Mammary epithelial cell (primary cell): ENCODE measurements at regions of chr9 and their contacts with region 1.

Region 1: DNA sequence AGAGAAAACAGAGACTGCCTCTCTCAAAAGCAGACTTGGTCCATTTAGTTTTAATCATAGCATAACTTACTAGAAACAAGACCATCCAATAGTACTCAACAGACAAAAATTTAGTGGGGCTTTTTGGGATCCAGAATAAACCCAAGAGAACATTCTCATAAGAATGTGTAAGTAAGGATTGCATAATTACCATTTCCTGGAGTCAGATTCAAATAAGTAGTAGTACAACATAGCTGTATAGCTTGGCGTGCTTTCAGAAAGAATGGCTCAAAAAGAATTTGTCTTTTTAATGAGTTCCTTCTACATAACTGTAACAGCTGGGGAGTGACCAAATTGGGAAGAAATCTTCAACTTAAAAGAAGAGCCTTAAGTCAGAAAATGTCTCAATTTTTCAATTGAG is 145.4 kb downstream of the DENND1A start:
- DNase-seq: peak; percentile 17
- H3K4me3 ChIP-seq: no peak overlapping the region
- H3K27ac ChIP-seq: no peak overlapping the region
- H3K4me1 ChIP-seq: peaks cover 2% of the 10 kb centered on the region
- H3K27me3 ChIP-seq: no peaks in the 10 kb centered on the region
- CTCF ChIP-seq: no peak

Region 2: DNA sequence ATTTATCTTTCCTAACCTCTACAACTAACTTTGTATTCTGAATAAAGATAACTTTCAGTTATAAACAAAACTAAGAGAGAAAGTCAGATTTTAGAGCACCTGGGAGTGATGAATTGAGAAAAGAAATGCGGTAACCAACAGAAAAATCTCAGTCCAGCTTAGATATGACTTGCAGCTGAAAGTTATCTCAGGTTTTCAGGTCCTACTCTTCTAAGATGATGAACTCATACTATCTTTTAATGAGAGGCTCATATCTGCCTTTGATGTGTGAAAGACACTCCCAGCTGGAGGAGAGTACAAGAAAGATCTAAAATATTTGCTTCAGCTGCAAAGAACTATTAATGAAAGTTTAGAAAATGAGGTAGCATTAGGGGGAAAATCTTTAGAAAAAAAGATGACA is 45.1 kb before region 1 on chr9:
- CTCF ChIA-PET with region 1: no interaction called
- dilution Hi-C with region 1: loop called (anchors 5 kb)
- in situ Hi-C with region 1: no loop called
- intact Hi-C with region 1: no loop called
- DNase-seq: no peak
- H3K4me3 ChIP-seq: no peak overlapping the region
- H3K27ac ChIP-seq: no peak overlapping the region
- H3K4me1 ChIP-seq: no peaks in the 10 kb centered on the region
- H3K27me3 ChIP-seq: no peaks in the 10 kb centered on the region
- CTCF ChIP-seq: no peak

Region 3: GRCh38 chr9:123893831-123894460 is 109.4 kb after region 1 on chr9:
- CTCF ChIA-PET with region 1: no interaction called
- dilution Hi-C with region 1: no loop called
- in situ Hi-C with region 1: no loop called
- intact Hi-C with region 1: no loop called
- DNase-seq: no peak
- H3K4me3 ChIP-seq: no peak overlapping the region
- H3K27ac ChIP-seq: no peak overlapping the region
- H3K4me1 ChIP-seq: no peaks in the 10 kb centered on the region
- H3K27me3 ChIP-seq: no peaks in the 10 kb centered on the region
- CTCF ChIP-seq: no peak